KBM-7 (cell line): ENCODE measurements at regions of chr7 and their contacts with region 1.

Region 1: DNA sequence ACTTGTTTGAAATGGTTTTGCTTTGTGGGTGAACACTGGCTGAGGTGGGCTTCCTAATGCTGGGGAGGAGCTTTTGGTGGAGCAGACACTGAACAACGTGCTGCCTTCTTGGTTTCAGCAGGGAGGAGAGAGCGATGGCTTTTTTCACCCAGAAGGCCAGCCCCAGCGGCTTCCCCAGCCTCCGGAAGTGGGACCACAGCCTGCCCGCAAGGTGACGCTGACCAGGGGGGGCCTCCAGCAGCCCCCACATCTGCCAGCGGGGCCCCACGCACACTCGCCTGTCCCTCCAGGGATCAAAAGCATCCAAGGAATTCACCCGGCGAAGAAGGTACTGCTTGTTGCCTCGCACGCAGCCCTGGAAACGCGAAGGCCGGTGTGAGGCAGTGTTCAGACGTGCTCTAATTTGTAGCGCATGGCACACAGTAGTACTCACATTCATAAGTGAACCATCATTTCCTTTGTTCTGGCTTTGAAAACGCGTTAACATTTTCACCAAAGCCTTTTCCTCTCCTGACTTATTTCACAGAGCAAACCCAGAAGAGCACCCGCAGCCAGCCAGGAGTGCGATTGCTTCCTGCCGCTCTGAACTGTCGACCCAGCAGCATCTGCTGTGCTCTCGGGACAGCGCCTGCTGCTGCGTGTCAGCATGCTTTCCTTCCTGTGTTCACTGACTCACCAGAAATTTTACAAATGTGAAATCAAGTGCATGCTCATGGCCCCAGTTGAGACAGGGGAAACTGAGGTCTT is 48.4 kb downstream of the SHH start:
- DNase-seq: peak; percentile 78

Region 2: GRCh38 chr7:154927624-154928143 is 836.2 kb before region 1 on chr7:
- in situ Hi-C with region 1: loop called (anchors 25 kb)
- DNase-seq: peak; percentile 85

Region 3: GRCh38 chr7:155380221-155380861 is 383.5 kb before region 1 on chr7:
- in situ Hi-C with region 1: loop called (anchors 25 kb)
- DNase-seq: peak; percentile 74

Region 4: GRCh38 chr7:155660059-155660757 is 103.7 kb before region 1 on chr7:
- in situ Hi-C with region 1: no loop called
- DNase-seq: no peak

Region 5: GRCh38 chr7:156232931-156233705 is 469.3 kb after region 1 on chr7:
- in situ Hi-C with region 1: no loop called
- DNase-seq: no peak